Mammary epithelial cell (primary cell): ENCODE measurements at regions of chr12 and their contacts with region 1.

Region 1: DNA sequence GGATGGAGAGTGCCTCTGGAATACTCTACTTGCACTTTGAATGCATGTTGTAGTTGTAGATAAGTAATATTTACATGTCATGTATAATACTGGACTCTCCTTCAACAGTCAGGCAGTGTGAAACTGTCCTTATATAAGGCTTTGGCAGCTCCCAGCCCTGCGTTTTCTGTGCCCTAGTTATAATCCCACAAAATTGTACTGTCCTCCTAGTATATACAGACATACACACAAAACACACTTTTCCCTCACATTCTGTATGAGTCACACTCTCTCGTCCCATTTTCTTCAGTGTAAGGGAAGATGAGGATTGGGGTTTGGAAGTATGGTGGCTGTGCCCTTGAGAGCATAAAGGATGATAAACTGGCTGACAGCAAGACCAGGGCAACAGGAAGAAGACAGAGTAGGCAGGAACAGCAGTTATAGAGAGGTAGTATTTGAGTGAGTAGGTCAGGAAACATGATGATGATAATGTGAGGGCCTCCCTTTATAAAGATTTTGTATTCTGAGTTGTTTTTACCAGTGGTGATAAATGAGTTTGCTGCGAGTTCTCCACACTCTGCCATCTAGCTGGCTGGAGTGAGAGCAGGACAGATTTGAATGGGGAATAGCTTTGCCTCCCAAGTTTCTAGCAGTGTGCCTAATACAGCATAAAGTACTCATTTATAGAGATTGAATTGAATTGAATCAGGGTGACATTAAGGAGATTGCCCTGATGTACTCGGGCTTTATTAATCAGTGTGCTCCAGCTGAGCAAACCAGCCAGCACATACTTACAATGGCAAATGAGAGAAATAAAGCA is 5.0 kb downstream of the CREBL2 start:
- DNase-seq: no peak
- H3K4me3 ChIP-seq: no peak overlapping the region
- H3K27ac ChIP-seq: no peak overlapping the region
- H3K4me1 ChIP-seq: peaks cover 4% of the 10 kb centered on the region
- H3K27me3 ChIP-seq: no peaks in the 10 kb centered on the region
- CTCF ChIP-seq: no peak

Region 2: DNA sequence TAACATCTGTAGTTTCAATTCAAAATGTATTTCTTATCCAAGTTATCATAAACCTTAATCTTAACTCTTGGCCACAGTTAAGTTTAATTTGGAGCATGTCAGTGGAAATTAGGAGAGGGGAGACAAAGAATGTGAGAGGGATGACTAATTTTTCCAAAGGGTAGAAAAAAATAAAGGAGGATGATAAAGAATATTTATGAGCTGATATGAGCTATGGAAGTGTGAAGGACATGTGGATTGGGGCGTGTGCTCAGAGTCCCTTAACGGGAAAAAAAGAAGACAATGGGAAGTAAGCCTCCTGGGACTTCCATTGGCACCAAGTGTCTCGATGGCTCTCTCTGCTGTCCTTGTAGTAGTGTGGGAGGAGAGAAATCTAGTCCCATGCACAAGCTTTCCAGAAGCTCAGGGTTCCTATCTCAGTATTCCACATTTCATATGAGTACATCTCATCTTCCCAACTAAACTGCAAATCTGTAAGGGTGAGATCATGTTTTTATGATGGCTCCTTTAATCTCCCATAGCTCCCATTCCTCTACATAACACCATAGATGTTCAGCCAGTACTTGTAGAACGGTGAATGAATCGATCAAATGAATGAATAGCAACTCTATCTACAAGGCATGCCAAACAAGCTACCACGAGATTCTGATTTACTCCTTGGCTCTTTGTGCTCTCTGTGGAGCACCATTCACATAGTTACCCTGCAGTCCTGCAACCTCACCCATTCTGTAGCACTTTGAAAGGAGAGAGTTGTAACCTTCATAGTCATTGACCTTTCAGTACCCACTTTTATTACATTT is 518.6 kb before region 1 on chr12:
- CTCF ChIA-PET with region 1: interaction called, 10 read pairs
- dilution Hi-C with region 1: no loop called
- in situ Hi-C with region 1: no loop called
- intact Hi-C with region 1: no loop called
- DNase-seq: no peak
- H3K4me3 ChIP-seq: no peak overlapping the region
- H3K27ac ChIP-seq: no peak overlapping the region
- H3K4me1 ChIP-seq: no peaks in the 10 kb centered on the region
- H3K27me3 ChIP-seq: no peaks in the 10 kb centered on the region
- CTCF ChIP-seq: no peak